ENCODE measurements at regions of chr2 and their contacts with region 1.

Region 1: DNA sequence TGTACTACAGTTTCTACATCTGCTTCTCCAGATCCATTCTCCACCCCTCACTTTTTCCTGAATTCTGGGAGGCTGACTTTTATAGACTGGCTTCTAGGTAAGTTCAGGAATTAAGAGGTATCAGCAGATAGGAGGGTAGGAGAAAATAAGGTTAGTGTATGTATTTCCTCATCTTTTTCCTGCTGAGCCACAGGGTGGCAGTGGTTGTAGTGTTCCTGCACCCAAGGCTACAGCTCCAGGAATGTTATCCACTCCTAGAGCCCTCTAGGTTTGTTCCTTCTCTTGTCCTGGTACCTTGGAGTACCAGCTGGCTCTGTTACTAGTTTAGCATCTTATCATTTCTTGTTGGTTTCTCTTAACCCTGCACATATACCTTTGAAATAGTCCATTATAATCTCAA is 40.7 kb upstream of the C2orf66 start:
- DNase-seq: peak; percentile 39
- H3K4me3 Mint-ChIP-seq: no peak overlapping the region
- H3K27ac Mint-ChIP-seq: no peak overlapping the region
- H3K4me1 Mint-ChIP-seq: peaks cover 6% of the 10 kb centered on the region
- H3K27me3 Mint-ChIP-seq: no peaks in the 10 kb centered on the region
- CTCF ChIP-seq: peak; percentile 34

Region 2: DNA sequence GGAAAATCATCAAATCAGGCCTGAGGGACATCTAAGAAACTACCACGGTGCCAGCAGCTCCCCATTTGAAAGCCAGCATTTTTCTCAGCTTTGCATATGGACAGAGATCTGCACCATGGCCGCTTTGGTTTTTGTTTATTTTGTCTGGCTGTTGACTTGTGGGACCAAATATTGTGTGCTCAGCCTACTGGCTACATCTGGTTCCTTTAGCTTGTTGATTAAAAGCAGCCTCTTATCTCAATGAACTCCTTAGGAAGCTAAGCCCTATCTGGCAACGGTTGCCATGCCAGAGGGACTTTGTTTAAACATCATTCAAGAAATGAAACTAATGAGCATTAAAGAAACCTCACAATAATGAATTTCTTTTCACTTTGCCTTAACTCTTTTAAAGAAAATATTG is 242.8 kb before region 1 on chr2:
- CTCF ChIA-PET with region 1: no interaction called
- POLR2A ChIA-PET with region 1: no interaction called
- intact Hi-C with region 1: no loop called
- DNase-seq: no peak
- H3K4me3 Mint-ChIP-seq: no peak overlapping the region
- H3K27ac Mint-ChIP-seq: no peak overlapping the region
- H3K4me1 Mint-ChIP-seq: peaks cover 16% of the 10 kb centered on the region
- H3K27me3 Mint-ChIP-seq: no peaks in the 10 kb centered on the region
- CTCF ChIP-seq: no peak

Region 3: GRCh38 chr2:196836440-196836839 is 13.5 kb before region 1 on chr2:
- CTCF ChIA-PET with region 1: no interaction called
- POLR2A ChIA-PET with region 1: no interaction called
- intact Hi-C with region 1: no loop called
- DNase-seq: peak; percentile 61
- H3K4me3 Mint-ChIP-seq: no peak overlapping the region
- H3K27ac Mint-ChIP-seq: peak overlapping the region; percentile 42
- H3K4me1 Mint-ChIP-seq: no peaks in the 10 kb centered on the region
- H3K27me3 Mint-ChIP-seq: no peaks in the 10 kb centered on the region
- CTCF ChIP-seq: no peak

Region 4: GRCh38 chr2:196926562-196927375 is 76.9 kb after region 1 on chr2 and contains the start of gene PGAP1:
- CTCF ChIA-PET with region 1: no interaction called
- POLR2A ChIA-PET with region 1: no interaction called
- intact Hi-C with region 1: loop called (anchors 5 kb)
- DNase-seq: peak; percentile 89
- H3K4me3 Mint-ChIP-seq: peak within 1 kb of the TSS; percentile 96
- H3K27ac Mint-ChIP-seq: peak within 1 kb of the TSS; percentile 61
- H3K4me1 Mint-ChIP-seq: peaks cover 22% of the 10 kb centered on the region
- H3K27me3 Mint-ChIP-seq: no peaks in the 10 kb centered on the region
- CTCF ChIP-seq: no peak
- total RNA-seq, gene PGAP1: 7.4 and 8.6 TPM in 2 replicates

Region 5: GRCh38 chr2:197011799-197012641 is 162.1 kb after region 1 on chr2:
- CTCF ChIA-PET with region 1: interaction called, 4 read pairs
- POLR2A ChIA-PET with region 1: no interaction called
- intact Hi-C with region 1: loop called (anchors 2 kb)
- DNase-seq: peak; percentile 62
- H3K4me3 Mint-ChIP-seq: no peak overlapping the region
- H3K27ac Mint-ChIP-seq: no peak overlapping the region
- H3K4me1 Mint-ChIP-seq: peaks cover 13% of the 10 kb centered on the region
- H3K27me3 Mint-ChIP-seq: no peaks in the 10 kb centered on the region
- CTCF ChIP-seq: peak; percentile 60

Region 6: DNA sequence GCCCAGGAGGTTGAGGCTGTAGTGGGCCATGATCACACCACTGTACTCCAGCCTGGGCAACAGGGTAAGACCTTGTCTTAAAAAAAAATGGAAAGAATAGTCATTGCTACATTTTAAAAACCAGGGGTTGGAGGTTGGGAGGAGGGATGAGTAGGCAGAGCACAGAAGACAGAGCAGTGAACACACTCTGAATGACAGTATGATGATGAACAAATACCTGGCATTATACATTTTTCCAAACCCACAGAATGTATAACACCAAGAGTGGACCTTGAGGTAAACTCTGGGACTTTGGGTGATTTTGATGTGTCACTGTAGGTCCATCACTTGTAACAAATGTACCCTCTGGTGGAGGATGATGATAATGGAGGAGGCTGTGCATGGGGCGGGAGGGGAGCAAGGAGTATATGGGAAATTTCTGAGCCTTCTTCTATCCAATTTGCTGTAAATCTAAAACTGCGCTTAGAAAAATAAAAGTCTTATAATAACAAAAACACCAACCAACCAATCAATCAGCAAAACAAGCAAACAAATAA is 188.0 kb after region 1 on chr2:
- CTCF ChIA-PET with region 1: no interaction called
- POLR2A ChIA-PET with region 1: no interaction called
- intact Hi-C with region 1: loop called (anchors 1 kb)
- DNase-seq: peak; percentile 6
- H3K4me3 Mint-ChIP-seq: no peak overlapping the region
- H3K27ac Mint-ChIP-seq: no peak overlapping the region
- H3K4me1 Mint-ChIP-seq: no peaks in the 10 kb centered on the region
- H3K27me3 Mint-ChIP-seq: no peaks in the 10 kb centered on the region
- CTCF ChIP-seq: peak; percentile 11

Region 7: GRCh38 chr2:197179744-197180498 is 330.0 kb after region 1 on chr2:
- CTCF ChIA-PET with region 1: no interaction called
- POLR2A ChIA-PET with region 1: no interaction called
- intact Hi-C with region 1: loop called (anchors 10 kb)
- DNase-seq: peak; percentile 31
- H3K4me3 Mint-ChIP-seq: no peak overlapping the region
- H3K27ac Mint-ChIP-seq: no peak overlapping the region
- H3K4me1 Mint-ChIP-seq: peaks cover 8% of the 10 kb centered on the region
- H3K27me3 Mint-ChIP-seq: no peaks in the 10 kb centered on the region
- CTCF ChIP-seq: no peak

Region 8: DNA sequence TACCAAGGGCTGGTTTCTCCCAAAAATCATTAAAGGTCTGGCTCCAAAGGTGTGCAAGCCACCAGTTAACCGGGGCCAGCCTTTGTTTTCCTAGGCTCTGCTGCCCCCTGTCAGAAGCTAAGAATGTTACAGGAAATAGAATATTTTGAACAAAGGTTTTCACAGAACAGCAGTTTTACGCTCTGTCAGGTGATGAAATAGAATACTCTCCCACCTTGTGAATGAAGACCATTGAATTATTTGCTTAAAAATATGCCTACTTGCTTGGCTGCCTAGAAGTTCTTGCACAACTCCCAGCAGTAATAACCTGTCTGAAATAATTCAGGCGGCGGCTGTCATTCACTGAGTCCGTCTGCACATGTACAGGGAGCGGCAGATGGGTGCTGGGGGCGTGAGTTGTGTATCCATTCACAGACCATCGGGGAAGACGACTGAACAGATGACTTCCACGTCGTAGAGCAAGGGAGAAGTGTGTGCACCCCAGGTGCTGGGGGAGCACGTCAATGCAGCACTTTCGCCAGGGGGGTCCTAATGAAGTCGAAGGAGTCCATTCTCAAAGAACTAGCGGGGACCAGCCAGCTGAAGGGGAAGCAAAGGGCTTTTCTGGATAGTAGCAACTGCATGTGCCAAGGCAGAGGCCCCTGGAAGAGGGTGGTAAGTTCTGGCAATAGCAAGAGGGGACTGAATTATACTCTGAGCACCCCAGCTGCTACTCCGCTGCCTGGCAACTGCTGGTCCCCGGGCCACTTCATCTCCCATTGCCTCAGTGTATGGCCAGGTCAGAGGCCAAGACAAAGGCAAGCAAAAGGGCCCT is 528.8 kb after region 1 on chr2:
- CTCF ChIA-PET with region 1: no interaction called
- POLR2A ChIA-PET with region 1: no interaction called
- intact Hi-C with region 1: loop called (anchors 2 kb)
- DNase-seq: peak; percentile 74
- H3K4me3 Mint-ChIP-seq: peak overlapping the region; percentile 19
- H3K27ac Mint-ChIP-seq: no peak overlapping the region
- H3K4me1 Mint-ChIP-seq: peaks cover 16% of the 10 kb centered on the region
- H3K27me3 Mint-ChIP-seq: peaks cover 12% of the 10 kb centered on the region
- CTCF ChIP-seq: peak; percentile 70

Region 9: GRCh38 chr2:197777823-197778407 is 928.0 kb after region 1 on chr2:
- CTCF ChIA-PET with region 1: no interaction called
- POLR2A ChIA-PET with region 1: no interaction called
- intact Hi-C with region 1: loop called (anchors 5 kb)
- DNase-seq: peak; percentile 65
- H3K4me3 Mint-ChIP-seq: no peak overlapping the region
- H3K27ac Mint-ChIP-seq: no peak overlapping the region
- H3K4me1 Mint-ChIP-seq: peaks cover 6% of the 10 kb centered on the region
- H3K27me3 Mint-ChIP-seq: peaks cover 11% of the 10 kb centered on the region
- CTCF ChIP-seq: peak; percentile 64